Ovary (tissue), 10 donors: ENCODE measurements at regions of chr2 and their contacts with region 1.

Region 1: DNA sequence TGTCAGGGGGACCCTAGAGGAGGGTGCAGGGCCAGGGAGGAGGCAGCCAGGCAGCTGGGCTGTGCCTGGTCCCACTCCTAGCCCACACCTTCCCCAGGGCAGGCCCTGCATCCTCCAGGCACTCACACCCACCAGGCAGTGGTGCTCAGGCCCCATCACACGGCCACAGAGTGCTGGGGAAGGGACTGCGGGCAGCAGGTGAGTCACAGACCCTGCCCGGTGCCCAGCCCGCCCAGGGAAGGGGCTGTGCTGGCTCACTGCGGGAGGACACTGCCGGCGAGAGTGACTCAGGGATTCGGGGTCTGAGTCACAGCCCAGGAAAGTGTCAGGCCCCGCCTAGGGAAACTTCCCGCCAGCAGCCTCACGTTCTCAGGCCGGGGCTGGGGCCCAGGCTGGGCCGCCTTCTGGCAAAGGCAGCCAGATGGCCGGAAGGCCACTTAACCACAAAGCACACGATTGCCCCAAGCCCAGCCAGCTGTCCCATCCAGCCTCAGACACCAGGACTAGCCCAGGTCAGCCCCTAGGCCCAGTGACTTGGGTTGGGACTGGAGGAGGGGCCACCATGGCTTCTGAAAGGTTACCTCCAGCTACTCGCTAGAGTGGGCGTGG is 42.2 kb downstream of the BIN1 start:
- DNase-seq: peak; percentile 70 to 83 (median 75)
- H3K4me3 ChIP-seq: no peak overlapping the region
- H3K27ac ChIP-seq: peak overlapping the region; percentile 4 to 21
- H3K4me1 ChIP-seq: no peaks in the 10 kb centered on the region
- H3K27me3 ChIP-seq: no peaks in the 10 kb centered on the region
- CTCF ChIP-seq: no peak
- EP300 ChIP-seq: no peak
- POLR2A ChIP-seq: no peak

Region 2: GRCh38 chr2:127106951-127107621 is 42.3 kb after region 1 on chr2 and contains the start of gene BIN1:
- intact Hi-C with region 1: loop called in 1 of 4 experiments (anchors 5 kb)
- DNase-seq: peak; percentile 78 to 90 (median 84)
- H3K4me3 ChIP-seq: peak within 1 kb of the TSS; percentile 51
- H3K27ac ChIP-seq: peak within 1 kb of the TSS; percentile 81 to 84
- H3K4me1 ChIP-seq: peaks cover 8% of the 10 kb centered on the region
- H3K27me3 ChIP-seq: no peaks in the 10 kb centered on the region
- CTCF ChIP-seq: no peak
- EP300 ChIP-seq: no peak
- POLR2A ChIP-seq: peak; percentile 34
- total RNA-seq, gene BIN1: 25.2 to 77.3 (median 57.6) TPM

Region 3: GRCh38 chr2:127161176-127162136 is 96.7 kb after region 1 on chr2:
- intact Hi-C with region 1: loop called in 1 of 4 experiments (anchors 5 kb)
- DNase-seq: peak in 1 of 5 donors; percentile 54
- H3K4me3 ChIP-seq: no peak overlapping the region
- H3K27ac ChIP-seq: peak overlapping the region in 1 of 2 donors; percentile 46
- H3K4me1 ChIP-seq: peaks cover 2% of the 10 kb centered on the region
- H3K27me3 ChIP-seq: no peaks in the 10 kb centered on the region
- CTCF ChIP-seq: no peak
- EP300 ChIP-seq: no peak
- POLR2A ChIP-seq: no peak

Region 4: GRCh38 chr2:127174136-127174535 is 109.4 kb after region 1 on chr2:
- intact Hi-C with region 1: loop called in 1 of 4 experiments (anchors 5 kb)
- DNase-seq: peak in 4 of 5 donors; percentile 22 to 60 (median 52)
- H3K4me3 ChIP-seq: no peak overlapping the region
- H3K27ac ChIP-seq: no peak overlapping the region
- H3K4me1 ChIP-seq: peaks cover 9% of the 10 kb centered on the region
- H3K27me3 ChIP-seq: no peaks in the 10 kb centered on the region
- CTCF ChIP-seq: no peak
- EP300 ChIP-seq: no peak
- POLR2A ChIP-seq: no peak

Region 5: GRCh38 chr2:127293748-127294562 is 229.2 kb after region 1 on chr2 and contains the start of gene ERCC3:
- intact Hi-C with region 1: loop called in 1 of 4 experiments (anchors 10 kb)
- DNase-seq: peak; percentile 78 to 90 (median 83)
- H3K4me3 ChIP-seq: peak within 1 kb of the TSS; percentile 71
- H3K27ac ChIP-seq: peak within 1 kb of the TSS; percentile 46 to 60
- H3K4me1 ChIP-seq: peaks cover 5% of the 10 kb centered on the region
- H3K27me3 ChIP-seq: no peaks in the 10 kb centered on the region
- CTCF ChIP-seq: no peak
- EP300 ChIP-seq: no peak
- POLR2A ChIP-seq: no peak
- total RNA-seq, gene ERCC3: 26.8 to 38.2 (median 35.1) TPM

Region 6: DNA sequence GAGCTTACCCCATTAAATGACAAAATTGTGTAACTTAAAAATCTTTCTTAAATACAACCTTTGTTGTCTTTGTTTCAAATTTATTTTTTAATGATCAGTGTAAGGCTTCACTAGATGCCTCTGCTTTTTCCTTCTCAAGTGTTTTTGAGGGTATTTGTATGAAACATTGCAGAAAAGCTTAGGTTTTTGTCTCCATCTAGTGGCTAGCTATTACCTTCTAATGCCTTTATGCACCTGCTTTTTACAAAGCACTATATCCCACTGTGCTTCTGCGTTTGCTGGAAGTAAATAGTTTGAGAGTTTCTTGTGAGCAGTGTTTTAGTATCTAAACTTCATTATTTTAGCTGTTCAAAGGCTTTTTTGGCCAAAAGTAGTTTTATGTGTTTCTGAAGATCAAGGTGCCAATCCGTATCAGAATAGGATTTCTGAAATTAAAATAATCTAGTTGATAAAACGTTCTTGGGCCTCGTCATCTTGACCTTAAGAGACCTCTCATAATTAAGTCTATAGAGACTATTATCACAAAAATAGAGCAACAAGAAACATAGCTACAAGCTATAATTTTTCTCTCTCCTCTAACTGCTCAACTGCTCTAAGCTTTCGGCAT is 414.6 kb after region 1 on chr2:
- intact Hi-C with region 1: loop called in 1 of 4 experiments (anchors 5 kb)
- DNase-seq: no peak
- H3K4me3 ChIP-seq: no peak overlapping the region
- H3K27ac ChIP-seq: no peak overlapping the region
- H3K4me1 ChIP-seq: no peaks in the 10 kb centered on the region
- H3K27me3 ChIP-seq: no peaks in the 10 kb centered on the region
- CTCF ChIP-seq: peak in 2 of 3 donors; percentile 54 to 67
- EP300 ChIP-seq: no peak
- POLR2A ChIP-seq: no peak